ENCODE measurements at regions of chr4 and their contacts with region 1.

Region 1: GRCh38 chr4:153628796-153629315 is 55.2 kb upstream of the TLR2 start:
- DNase-seq: no peak
- H3K4me3 ChIP-seq: no peak overlapping the region
- H3K27ac ChIP-seq: no peak overlapping the region
- H3K4me1 ChIP-seq: no peaks in the 10 kb centered on the region
- H3K27me3 ChIP-seq: no peaks in the 10 kb centered on the region
- CTCF ChIP-seq: no peak
- EP300 ChIP-seq: no peak
- POLR2A ChIP-seq: no peak

Region 2: GRCh38 chr4:153611679-153612078 is 17.2 kb before region 1 on chr4:
- in situ Hi-C with region 1: no loop called
- intact Hi-C with region 1: loop called (anchors 1 kb)
- DNase-seq: no peak
- H3K4me3 ChIP-seq: no peak overlapping the region
- H3K27ac ChIP-seq: no peak overlapping the region
- H3K4me1 ChIP-seq: peaks cover 0 to 10% (median 0%) of the 10 kb centered on the region in 4 donors
- H3K27me3 ChIP-seq: no peaks in the 10 kb centered on the region
- CTCF ChIP-seq: no peak
- EP300 ChIP-seq: no peak
- POLR2A ChIP-seq: no peak

Region 3: GRCh38 chr4:153890761-153891160 is 261.9 kb after region 1 on chr4:
- in situ Hi-C with region 1: no loop called
- intact Hi-C with region 1: no loop called
- DNase-seq: no peak
- H3K4me3 ChIP-seq: no peak overlapping the region
- H3K27ac ChIP-seq: no peak overlapping the region
- H3K4me1 ChIP-seq: no peaks in the 10 kb centered on the region
- H3K27me3 ChIP-seq: no peaks in the 10 kb centered on the region
- CTCF ChIP-seq: no peak
- EP300 ChIP-seq: no peak
- POLR2A ChIP-seq: no peak

Region 4: DNA sequence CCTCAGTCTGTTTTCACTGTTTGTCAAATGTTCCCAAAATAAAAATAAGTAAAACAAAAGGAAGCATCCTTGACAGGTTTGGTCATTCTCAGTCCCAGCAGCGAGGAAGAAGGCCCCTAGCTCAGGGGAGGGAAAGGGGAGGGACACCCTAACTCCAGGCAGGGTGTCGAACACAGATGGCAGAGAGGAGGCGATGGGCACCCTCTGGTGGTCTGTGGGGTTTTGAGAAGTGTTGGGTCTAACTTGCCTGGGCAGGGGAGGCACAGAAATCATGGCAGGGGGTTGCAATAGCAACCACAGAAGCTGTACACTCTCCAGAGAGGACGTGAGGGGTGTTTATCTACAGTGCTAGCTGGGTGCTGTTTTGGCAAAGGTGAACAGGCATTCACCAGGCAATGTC is 389.8 kb after region 1 on chr4:
- in situ Hi-C with region 1: no loop called
- intact Hi-C with region 1: no loop called
- DNase-seq: no peak
- H3K4me3 ChIP-seq: no peak overlapping the region
- H3K27ac ChIP-seq: no peak overlapping the region
- H3K4me1 ChIP-seq: peaks cover 0 to 3% (median 0%) of the 10 kb centered on the region in 4 donors
- H3K27me3 ChIP-seq: no peaks in the 10 kb centered on the region
- CTCF ChIP-seq: no peak
- EP300 ChIP-seq: no peak
- POLR2A ChIP-seq: no peak